ENCODE measurements at regions of chr2 and their contacts with region 1.

Region 1: DNA sequence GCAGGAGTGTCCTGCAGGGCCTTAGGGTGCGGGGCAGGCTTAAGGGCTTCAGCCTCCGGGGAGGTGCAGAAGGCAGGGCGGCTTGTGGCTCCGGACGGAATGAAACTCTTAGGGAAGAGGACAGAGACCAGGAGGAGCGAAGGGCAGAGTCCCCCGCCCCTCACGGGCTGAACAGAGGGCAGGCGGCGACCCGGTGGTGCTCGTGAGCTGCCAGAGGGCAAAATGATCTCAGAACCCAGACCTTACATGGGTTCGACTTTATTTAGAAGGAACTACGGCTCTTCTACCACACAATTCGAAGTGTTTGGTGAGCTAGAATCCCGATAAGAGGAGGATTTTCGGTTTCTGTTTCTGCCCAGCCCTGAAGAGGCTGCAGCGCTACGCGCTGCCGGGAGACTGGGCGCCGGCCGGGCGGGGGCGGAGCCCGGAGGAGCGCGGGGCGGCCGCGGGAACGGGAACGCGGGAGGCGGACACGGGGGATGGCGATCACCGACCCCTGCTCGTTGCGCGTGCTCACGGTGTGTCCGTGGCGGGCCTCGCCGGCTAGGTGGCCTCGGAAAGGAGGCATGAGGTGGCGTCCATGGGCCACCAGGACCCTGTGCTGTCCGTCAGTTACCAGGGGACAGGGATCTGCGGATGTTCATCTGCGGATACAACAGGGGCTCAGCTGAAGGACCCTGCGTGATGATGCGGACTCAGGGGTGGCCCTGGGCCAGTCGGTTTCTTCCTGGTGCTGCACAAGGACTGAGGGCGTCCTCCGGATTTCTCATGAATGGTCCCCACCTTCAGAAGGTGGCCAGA is 4.2 kb upstream of the SP100 start:
- DNase-seq: peak; percentile 69
- H3K4me3 ChIP-seq: peak overlapping the region; percentile 17 to 77 (median 49)
- H3K27ac ChIP-seq: peak overlapping the region; percentile 72
- H3K4me1 ChIP-seq: peaks cover 52% of the 10 kb centered on the region
- H3K27me3 ChIP-seq: no peaks in the 10 kb centered on the region
- CTCF ChIP-seq: no peak
- POLR2A ChIP-seq: peak; percentile 71

Region 2: DNA sequence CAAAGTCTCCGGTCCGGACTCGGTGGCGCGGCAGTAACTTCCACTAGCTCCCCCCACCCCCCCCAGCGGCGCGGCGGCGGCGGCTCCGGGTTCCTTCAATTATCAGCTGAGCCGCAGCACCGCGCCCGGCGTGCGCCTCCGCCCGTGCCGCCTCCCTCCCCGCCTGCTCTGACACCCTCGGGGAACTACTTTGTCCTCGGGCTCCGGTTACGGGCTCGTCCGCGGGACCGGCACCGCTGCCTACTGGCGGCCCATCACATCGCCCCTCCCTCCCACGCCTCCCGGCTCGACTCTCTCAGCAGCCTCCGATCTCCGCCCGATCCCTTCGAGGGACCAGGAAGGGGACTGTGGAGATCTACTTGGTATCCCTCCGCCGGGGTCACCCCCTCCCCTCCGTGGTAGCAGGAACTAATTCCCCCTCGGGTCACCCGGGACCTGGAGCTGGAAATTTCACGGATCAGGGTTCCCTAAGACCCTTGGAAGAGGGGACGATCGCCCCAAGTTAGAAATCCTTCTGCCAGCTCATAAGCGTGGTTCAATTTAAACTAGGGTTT is 489.8 kb before region 1 on chr2 and contains the start of gene TRIP12:
- CTCF ChIA-PET with region 1: no interaction called
- POLR2A ChIA-PET with region 1: interaction called, 7 read pairs
- dilution Hi-C with region 1: no loop called
- intact Hi-C with region 1: loop called (anchors 2 kb)
- DNase-seq: peak; percentile 97
- H3K4me3 ChIP-seq: peak within 1 kb of the TSS; percentile 62 to 98 (median 90)
- H3K27ac ChIP-seq: peak within 1 kb of the TSS; percentile 91
- H3K4me1 ChIP-seq: peaks cover 12% of the 10 kb centered on the region
- H3K27me3 ChIP-seq: no peaks in the 10 kb centered on the region
- CTCF ChIP-seq: no peak
- POLR2A ChIP-seq: peak; percentile 62
- total RNA-seq, gene TRIP12: 256 and 278 TPM in 2 replicates

Region 3: DNA sequence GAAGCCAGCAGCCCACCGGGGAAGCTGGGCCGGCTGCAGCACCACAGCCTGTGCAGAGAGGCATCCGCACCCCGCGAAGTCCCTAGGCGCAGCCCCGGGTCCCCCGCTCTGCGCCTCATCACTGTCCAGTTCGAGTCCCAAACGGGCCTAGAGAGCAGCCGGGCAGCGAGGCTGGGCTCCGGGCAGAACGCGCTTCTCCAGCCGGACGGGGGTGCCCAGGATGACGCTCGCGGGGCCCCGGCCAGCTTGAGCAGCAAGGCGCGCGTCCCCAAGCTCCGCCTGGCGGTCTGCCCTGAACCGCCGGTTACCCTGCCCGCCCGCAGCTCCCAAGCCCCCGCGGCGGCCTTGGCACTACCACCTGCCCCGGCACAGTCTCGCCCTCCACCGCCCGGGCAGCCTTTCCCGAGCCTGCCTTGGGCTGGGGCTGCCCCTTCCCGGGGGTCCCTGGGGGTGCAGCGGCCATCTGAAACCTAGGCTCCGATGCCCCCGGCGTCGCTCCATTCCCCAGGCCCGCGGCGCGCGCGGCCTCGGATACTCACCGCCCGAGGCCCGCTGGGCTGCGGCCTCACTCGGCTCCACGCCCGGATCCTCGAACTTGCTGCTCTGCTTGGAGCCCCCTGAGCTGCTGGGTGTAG is 343.6 kb before region 1 on chr2:
- CTCF ChIA-PET with region 1: interaction called, 3 read pairs
- POLR2A ChIA-PET with region 1: no interaction called
- dilution Hi-C with region 1: no loop called
- intact Hi-C with region 1: loop called (anchors 5 kb)
- DNase-seq: peak; percentile 50
- H3K4me3 ChIP-seq: peak overlapping the region; percentile 39 to 45 (median 44)
- H3K27ac ChIP-seq: no peak overlapping the region
- H3K4me1 ChIP-seq: peaks cover 7% of the 10 kb centered on the region
- H3K27me3 ChIP-seq: peaks cover 1 to 7% of the 10 kb centered on the region in 2 experiments
- CTCF ChIP-seq: peak in 1 of 2 donors; percentile 38
- POLR2A ChIP-seq: no peak

Region 4: GRCh38 chr2:230219419-230220331 is 192.1 kb before region 1 on chr2 and contains the start of gene SP110:
- CTCF ChIA-PET with region 1: no interaction called
- POLR2A ChIA-PET with region 1: no interaction called
- dilution Hi-C with region 1: no loop called
- intact Hi-C with region 1: loop called (anchors 5 kb)
- DNase-seq: peak; percentile 81
- H3K4me3 ChIP-seq: peak within 1 kb of the TSS; percentile 60 to 85 (median 70)
- H3K27ac ChIP-seq: peak within 1 kb of the TSS; percentile 11
- H3K4me1 ChIP-seq: peaks cover 6% of the 10 kb centered on the region
- H3K27me3 ChIP-seq: no peaks in the 10 kb centered on the region
- CTCF ChIP-seq: no peak
- POLR2A ChIP-seq: peak; percentile 47
- total RNA-seq, gene SP110: 10.7 and 11.6 TPM in 2 replicates

Region 5: GRCh38 chr2:230441227-230441897 is 29.6 kb after region 1 on chr2:
- CTCF ChIA-PET with region 1: no interaction called
- POLR2A ChIA-PET with region 1: no interaction called
- dilution Hi-C with region 1: no loop called
- intact Hi-C with region 1: loop called (anchors 5 kb)
- DNase-seq: peak; percentile 82
- H3K4me3 ChIP-seq: no peak overlapping the region
- H3K27ac ChIP-seq: peak overlapping the region; percentile 54
- H3K4me1 ChIP-seq: peaks cover 35% of the 10 kb centered on the region
- H3K27me3 ChIP-seq: no peaks in the 10 kb centered on the region
- CTCF ChIP-seq: no peak
- POLR2A ChIP-seq: no peak

Region 6: GRCh38 chr2:230712443-230713330 is 300.9 kb after region 1 on chr2 and contains the start of gene CAB39:
- CTCF ChIA-PET with region 1: no interaction called
- POLR2A ChIA-PET with region 1: no interaction called
- dilution Hi-C with region 1: no loop called
- intact Hi-C with region 1: loop called (anchors 2 kb)
- DNase-seq: peak; percentile 90
- H3K4me3 ChIP-seq: peak within 1 kb of the TSS; percentile 75 to 94 (median 91)
- H3K27ac ChIP-seq: peak within 1 kb of the TSS; percentile 84
- H3K4me1 ChIP-seq: peaks cover 20% of the 10 kb centered on the region
- H3K27me3 ChIP-seq: peaks cover 0 to 2% of the 10 kb centered on the region in 2 experiments
- CTCF ChIP-seq: peak; percentile 81 to 93
- POLR2A ChIP-seq: peak; percentile 71
- total RNA-seq, gene CAB39: 53.7 and 57.3 TPM in 2 replicates